ENCODE measurements at regions of chr11 and their contacts with region 1.

Region 1: GRCh38 chr11:123407130-123407995 is 22.7 kb upstream of the GRAMD1B start:
- DNase-seq: peak; percentile 14 to 85 (median 51)
- ATAC-seq: peak; percentile 59 to 70 (median 66)
- H3K4me3 ChIP-seq: no peak overlapping the region
- H3K4me3 Mint-ChIP-seq: no peak overlapping the region
- H3K27ac ChIP-seq: no peak overlapping the region
- H3K27ac Mint-ChIP-seq: no peak overlapping the region
- H3K4me1 ChIP-seq: peaks cover 2 to 4% of the 10 kb centered on the region in 2 experiments
- H3K4me1 Mint-ChIP-seq: peaks cover 0 to 4% (median 0%) of the 10 kb centered on the region in 3 donors
- H3K27me3 ChIP-seq: peaks cover 0 to 5% of the 10 kb centered on the region in 2 experiments
- H3K27me3 Mint-ChIP-seq: peaks cover 2 to 4% of the 10 kb centered on the region in 2 donors

Region 2: GRCh38 chr11:122604621-122605020 is 802.7 kb before region 1 on chr11:
- CTCF ChIA-PET with region 1: no interaction called
- POLR2A ChIA-PET with region 1: no interaction called
- DNase-seq: no peak
- ATAC-seq: no peak
- H3K4me3 ChIP-seq: no peak overlapping the region
- H3K4me3 Mint-ChIP-seq: no peak overlapping the region
- H3K27ac ChIP-seq: no peak overlapping the region
- H3K27ac Mint-ChIP-seq: no peak overlapping the region
- H3K4me1 ChIP-seq: no peaks in the 10 kb centered on the region
- H3K4me1 Mint-ChIP-seq: no peaks in the 10 kb centered on the region
- H3K27me3 ChIP-seq: peaks cover 0 to 9% of the 10 kb centered on the region in 2 experiments
- H3K27me3 Mint-ChIP-seq: peaks cover 4 to 11% of the 10 kb centered on the region in 2 donors

Region 3: DNA sequence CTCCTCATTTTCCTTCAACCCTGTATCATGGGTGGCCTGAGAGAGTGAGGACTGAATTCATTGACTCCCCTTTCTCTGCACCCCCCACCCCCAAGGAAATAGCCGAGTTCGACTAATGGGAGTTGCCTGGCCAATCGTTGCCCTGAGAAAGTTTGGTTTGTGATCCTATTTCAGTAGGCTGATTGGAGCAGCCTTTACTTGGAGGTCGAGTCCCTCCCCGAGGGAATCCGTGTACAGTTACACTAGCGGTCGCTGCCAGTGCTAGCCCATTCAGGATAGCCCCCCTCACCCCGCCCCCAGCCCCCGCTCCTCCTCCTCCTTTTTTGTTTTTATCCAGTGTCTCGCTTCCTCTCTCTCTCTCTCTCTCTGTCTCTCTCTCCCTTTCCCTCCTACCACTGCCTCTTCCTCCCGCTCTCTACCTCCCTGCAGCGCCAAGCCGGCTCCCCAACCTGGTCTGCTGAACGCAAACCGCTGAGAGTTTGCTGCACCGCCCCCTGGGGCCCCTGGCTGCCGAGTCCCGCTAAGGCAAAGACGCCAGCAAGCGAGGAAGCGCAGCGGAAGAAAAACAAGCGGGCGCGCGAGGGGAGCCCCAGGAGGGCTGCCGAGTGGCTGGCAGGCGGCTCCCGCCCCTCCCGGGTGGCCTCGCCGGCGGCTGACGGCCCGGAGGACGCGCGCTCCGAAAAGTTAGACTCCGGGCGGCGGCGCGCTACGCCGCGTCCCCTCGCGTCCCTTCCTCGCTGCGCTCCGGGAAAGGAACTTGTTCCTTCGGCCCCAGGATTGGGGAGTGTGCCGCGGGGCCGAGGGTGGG is 22.8 kb after region 1 on chr11 and contains the start of gene GRAMD1B:
- CTCF ChIA-PET with region 1: interaction called in 1 of 2 experiments, 29 read pairs
- POLR2A ChIA-PET with region 1: no interaction called
- DNase-seq: peak; percentile 59 to 87 (median 77)
- ATAC-seq: peak; percentile 85 to 89 (median 86)
- H3K4me3 ChIP-seq: peak within 1 kb of the TSS; percentile 66 to 71
- H3K4me3 Mint-ChIP-seq: peak within 1 kb of the TSS; percentile 82 to 89 (median 88)
- H3K27ac ChIP-seq: peak within 1 kb of the TSS; percentile 59
- H3K27ac Mint-ChIP-seq: peak within 1 kb of the TSS; percentile 91
- H3K4me1 ChIP-seq: peaks cover 11 to 25% of the 10 kb centered on the region in 2 experiments
- H3K4me1 Mint-ChIP-seq: peaks cover 28 to 39% (median 34%) of the 10 kb centered on the region in 3 donors
- H3K27me3 ChIP-seq: peaks cover 0 to 2% of the 10 kb centered on the region in 2 experiments
- H3K27me3 Mint-ChIP-seq: peaks cover 0 to 2% of the 10 kb centered on the region in 2 donors
- total RNA-seq, gene GRAMD1B: 8.6 to 15.6 (median 10.5) TPM

Region 4: DNA sequence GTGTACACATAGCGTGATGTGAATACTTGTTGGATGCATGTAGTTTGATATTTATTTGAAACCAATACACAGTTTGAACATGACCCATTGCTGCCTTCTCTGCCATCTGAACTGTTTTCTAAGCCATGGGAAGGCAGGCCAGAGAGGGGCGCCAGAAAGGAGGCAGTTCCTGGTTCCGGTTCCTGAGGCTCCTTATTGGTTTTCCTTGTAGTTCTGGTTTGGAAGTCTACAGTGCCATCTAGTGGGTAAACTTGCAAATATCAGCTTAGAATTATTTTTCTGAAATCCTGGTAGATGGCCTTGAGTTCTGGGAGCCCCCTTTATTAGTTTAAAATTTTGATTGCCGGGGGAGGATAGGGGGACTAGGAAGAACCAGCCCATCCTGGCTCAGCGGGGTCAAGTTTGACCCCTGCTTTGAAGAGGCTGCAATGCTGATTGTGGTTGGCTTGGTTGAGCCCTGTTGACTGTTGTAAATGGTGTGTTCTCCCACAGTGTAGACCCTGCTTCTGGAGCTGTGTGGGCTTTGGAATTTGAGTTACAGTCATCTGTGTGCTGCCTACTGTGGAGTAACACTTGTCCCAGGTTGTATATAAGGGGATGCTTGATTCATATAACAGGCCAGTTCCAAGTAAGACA is 71.1 kb after region 1 on chr11:
- CTCF ChIA-PET with region 1: interaction called, 34 to 138 read pairs
- POLR2A ChIA-PET with region 1: interaction called in 1 of 2 experiments, 5 read pairs
- DNase-seq: peak in 15 of 35 experiments; percentile 2 to 77 (median 18)
- ATAC-seq: peak; percentile 40 to 48 (median 44)
- H3K4me3 ChIP-seq: no peak overlapping the region
- H3K4me3 Mint-ChIP-seq: peak overlapping the region in 1 of 3 donors; percentile 16
- H3K27ac ChIP-seq: no peak overlapping the region
- H3K27ac Mint-ChIP-seq: peak overlapping the region in 1 of 2 donors; percentile 4
- H3K4me1 ChIP-seq: peaks cover 0 to 28% of the 10 kb centered on the region in 2 experiments
- H3K4me1 Mint-ChIP-seq: peaks cover 8 to 24% (median 14%) of the 10 kb centered on the region in 3 donors
- H3K27me3 ChIP-seq: no peaks in the 10 kb centered on the region
- H3K27me3 Mint-ChIP-seq: no peaks in the 10 kb centered on the region

Measured in T-cell (primary cell).